ENCODE measurements at regions of chr12 and their contacts with region 1.

Region 1: GRCh38 chr12:47079468-47079980 is at the starts of genes AMIGO2 and PCED1B:
- DNase-seq: peak; percentile 67
- H3K4me3 ChIP-seq: peak within 1 kb of the TSS; percentile 65 to 91 (median 78)
- H3K27ac ChIP-seq: peak within 1 kb of the TSS; percentile 97
- H3K4me1 ChIP-seq: peaks cover 13% of the 10 kb centered on the region
- H3K27me3 ChIP-seq: no peaks in the 10 kb centered on the region
- CTCF ChIP-seq: peak in 1 of 2 donors; percentile 18
- POLR2A ChIP-seq: no peak
- total RNA-seq, gene AMIGO2: 7.5 and 8.7 TPM in 2 replicates
- total RNA-seq, gene PCED1B: 1.5 and 2.6 TPM in 2 replicates

Region 2: DNA sequence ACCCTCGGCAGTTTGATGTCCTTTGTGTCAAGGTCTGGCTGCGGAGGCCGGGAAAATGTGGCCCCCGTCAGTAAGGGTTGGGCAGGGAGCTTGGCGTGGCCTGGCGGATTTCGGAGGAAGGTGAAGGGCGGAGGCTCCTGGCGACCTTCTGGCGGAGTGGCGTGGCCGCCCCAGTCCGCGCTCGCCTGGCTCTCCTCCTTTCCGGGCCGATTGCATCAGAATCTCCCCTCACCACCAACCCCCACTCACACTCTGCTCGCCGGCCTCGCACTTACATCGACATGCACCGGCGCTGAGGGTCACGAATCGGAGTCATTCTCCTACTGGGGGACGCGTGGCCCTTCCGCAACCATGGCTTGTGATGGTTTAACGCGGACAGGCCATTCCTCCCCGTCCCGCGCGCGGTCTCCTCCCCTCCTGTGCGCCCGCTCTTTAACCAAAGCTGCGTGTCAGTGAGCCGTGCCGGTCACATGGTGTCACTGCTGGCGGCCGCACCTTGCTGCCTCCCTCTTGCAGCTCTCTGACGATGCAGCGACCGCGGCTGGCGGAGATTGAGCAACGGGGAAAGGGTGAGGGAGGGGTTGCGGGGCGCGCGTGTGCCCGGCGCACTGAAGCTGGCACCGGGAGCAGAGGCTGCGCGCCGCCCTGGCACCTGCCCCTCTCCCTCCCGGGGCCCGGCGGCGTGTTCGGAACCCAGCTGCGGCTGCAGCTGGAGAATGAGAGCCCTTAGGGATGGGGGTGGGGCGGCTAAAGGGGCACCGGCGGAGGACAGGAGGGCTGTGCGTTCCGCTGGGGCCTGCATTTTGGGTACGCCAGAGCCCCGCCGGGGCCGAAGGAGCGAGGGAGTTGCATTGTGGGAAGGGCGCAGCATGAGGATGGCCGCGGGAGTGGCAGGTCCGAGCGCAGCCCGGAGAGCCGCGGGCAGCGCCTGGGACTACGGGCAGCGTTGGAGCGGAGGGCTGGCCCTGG is 810.6 kb before region 1 on chr12 and contains the start of gene SLC38A1:
- CTCF ChIA-PET with region 1: no interaction called
- POLR2A ChIA-PET with region 1: no interaction called
- dilution Hi-C with region 1: no loop called
- intact Hi-C with region 1: loop called (anchors 5 kb)
- DNase-seq: peak; percentile 73
- H3K4me3 ChIP-seq: peak within 1 kb of the TSS; percentile 59 to 85 (median 84)
- H3K27ac ChIP-seq: peak within 1 kb of the TSS; percentile 82
- H3K4me1 ChIP-seq: peaks cover 31% of the 10 kb centered on the region
- H3K27me3 ChIP-seq: no peaks in the 10 kb centered on the region
- CTCF ChIP-seq: no peak
- POLR2A ChIP-seq: peak; percentile 66
- total RNA-seq, gene SLC38A1: 81.0 and 86.4 TPM in 2 replicates

Region 3: GRCh38 chr12:47041327-47041726 is 38.2 kb before region 1 on chr12:
- CTCF ChIA-PET with region 1: no interaction called
- POLR2A ChIA-PET with region 1: no interaction called
- dilution Hi-C with region 1: no loop called
- intact Hi-C with region 1: no loop called
- DNase-seq: no peak
- H3K4me3 ChIP-seq: no peak overlapping the region
- H3K27ac ChIP-seq: no peak overlapping the region
- H3K4me1 ChIP-seq: no peaks in the 10 kb centered on the region
- H3K27me3 ChIP-seq: peaks cover 3 to 4% of the 10 kb centered on the region in 2 experiments
- CTCF ChIP-seq: no peak
- POLR2A ChIP-seq: no peak

Region 4: DNA sequence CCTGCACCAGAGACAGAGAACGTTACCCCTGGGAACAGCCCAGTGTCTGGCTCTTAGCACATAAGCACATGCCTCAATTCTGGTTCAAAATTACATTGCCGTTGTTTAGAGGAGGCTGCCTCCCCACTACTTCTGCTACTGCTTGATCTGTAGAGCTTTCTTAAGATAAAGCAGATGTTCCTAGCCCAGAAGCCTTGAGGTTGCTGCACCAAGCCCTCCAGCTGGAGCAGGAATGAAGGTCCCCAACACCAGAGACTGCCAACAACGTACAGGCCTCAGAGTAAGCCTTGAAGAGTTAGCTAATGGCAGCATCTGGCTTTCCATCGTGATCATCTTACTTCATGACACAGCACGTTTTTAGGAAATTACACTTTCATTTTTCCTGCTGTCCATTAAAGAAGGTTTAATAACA is 35.0 kb after region 1 on chr12:
- CTCF ChIA-PET with region 1: no interaction called
- POLR2A ChIA-PET with region 1: no interaction called
- dilution Hi-C with region 1: no loop called
- intact Hi-C with region 1: no loop called
- DNase-seq: no peak
- H3K4me3 ChIP-seq: no peak overlapping the region
- H3K27ac ChIP-seq: no peak overlapping the region
- H3K4me1 ChIP-seq: no peaks in the 10 kb centered on the region
- H3K27me3 ChIP-seq: no peaks in the 10 kb centered on the region
- CTCF ChIP-seq: no peak
- POLR2A ChIP-seq: no peak

Region 5: GRCh38 chr12:47193066-47193465 is 113.5 kb after region 1 on chr12:
- CTCF ChIA-PET with region 1: interaction called, 7 read pairs
- POLR2A ChIA-PET with region 1: no interaction called
- dilution Hi-C with region 1: no loop called
- intact Hi-C with region 1: loop called (anchors 1 kb)
- DNase-seq: no peak
- H3K4me3 ChIP-seq: no peak overlapping the region
- H3K27ac ChIP-seq: no peak overlapping the region
- H3K4me1 ChIP-seq: peaks cover 12% of the 10 kb centered on the region
- H3K27me3 ChIP-seq: no peaks in the 10 kb centered on the region
- CTCF ChIP-seq: no peak
- POLR2A ChIP-seq: no peak

Region 6: GRCh38 chr12:47307680-47308399 is 228.3 kb after region 1 on chr12:
- CTCF ChIA-PET with region 1: interaction called, 28 read pairs
- POLR2A ChIA-PET with region 1: interaction called, 3 read pairs
- dilution Hi-C with region 1: no loop called
- intact Hi-C with region 1: loop called (anchors 1 kb)
- DNase-seq: peak; percentile 66
- H3K4me3 ChIP-seq: no peak overlapping the region
- H3K27ac ChIP-seq: no peak overlapping the region
- H3K4me1 ChIP-seq: no peaks in the 10 kb centered on the region
- H3K27me3 ChIP-seq: no peaks in the 10 kb centered on the region
- CTCF ChIP-seq: peak; percentile 47 to 57
- POLR2A ChIP-seq: no peak